ENCODE measurements at regions of chr16 and their contacts with region 1.

Region 1: DNA sequence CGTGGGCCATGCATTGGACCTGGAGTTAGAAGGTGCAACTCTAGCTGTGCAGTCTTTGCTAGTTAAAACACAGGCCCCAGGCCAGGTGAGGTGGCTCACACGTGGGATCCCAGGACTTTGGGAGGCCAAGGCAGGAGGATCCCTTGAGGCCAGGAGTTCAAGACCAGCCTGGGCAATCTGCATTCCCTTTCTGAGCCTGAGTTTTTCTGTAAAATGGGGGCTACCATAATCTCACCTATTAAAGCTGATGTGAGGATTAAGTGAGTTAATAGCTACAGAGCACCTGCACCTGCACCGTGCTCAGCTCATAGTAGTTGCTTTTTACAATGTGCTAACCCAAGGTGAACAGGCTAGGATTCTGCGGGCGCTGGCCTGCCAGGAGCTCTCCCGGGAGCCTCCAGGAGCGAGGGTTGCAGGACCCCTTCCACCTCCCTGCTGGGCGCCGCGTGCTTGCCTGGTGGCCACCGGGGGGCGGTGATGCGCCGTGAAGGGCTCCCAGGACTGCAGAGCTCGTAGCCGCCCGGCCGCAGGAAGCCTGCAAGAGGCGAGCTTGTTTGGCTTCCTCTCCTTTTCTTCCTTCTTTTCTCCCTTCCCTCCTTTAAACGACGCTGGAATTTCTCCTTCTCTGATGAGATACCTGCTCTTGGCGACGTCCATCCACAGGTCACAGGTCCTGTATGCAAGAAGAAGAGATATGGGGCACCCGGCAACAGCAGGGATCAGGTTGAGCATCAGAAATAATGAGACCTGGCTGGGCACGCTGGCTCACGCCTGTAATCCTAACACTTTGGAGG is 51.3 kb downstream of the ZFP90 start:
- DNase-seq: peak; percentile 2
- ATAC-seq: peak; percentile 100
- H3K4me3 ChIP-seq: peak overlapping the region in 1 of 2 experiments; percentile 35; a peak in 2 of 4 replicates
- H3K27ac ChIP-seq: no peak overlapping the region
- H3K4me1 ChIP-seq: no peaks in the 10 kb centered on the region
- H3K27me3 ChIP-seq: no peaks in the 10 kb centered on the region
- CTCF ChIP-seq: peak; percentile 89

Region 2: GRCh38 chr16:68528686-68529379 is 61.6 kb before region 1 on chr16:
- CTCF ChIA-PET with region 1: interaction called, 10 read pairs
- POLR2A ChIA-PET with region 1: no interaction called
- in situ Hi-C with region 1: no loop called
- intact Hi-C with region 1: no loop called
- DNase-seq: peak; percentile 64
- ATAC-seq: peak; percentile 88
- H3K4me3 ChIP-seq: peak overlapping the region; percentile 73 to 74
- H3K27ac ChIP-seq: no peak overlapping the region
- H3K4me1 ChIP-seq: no peaks in the 10 kb centered on the region; the same call in 1 of the 2 replicates
- H3K27me3 ChIP-seq: no peaks in the 10 kb centered on the region
- CTCF ChIP-seq: peak; percentile 90

Region 3: GRCh38 chr16:68658258-68659008 is 68.0 kb after region 1 on chr16:
- CTCF ChIA-PET with region 1: interaction called, 10 read pairs
- POLR2A ChIA-PET with region 1: no interaction called
- in situ Hi-C with region 1: no loop called
- intact Hi-C with region 1: no loop called
- DNase-seq: peak; percentile 25
- ATAC-seq: peak; percentile 85
- H3K4me3 ChIP-seq: peak overlapping the region in 1 of 2 experiments; percentile 33; a peak in 1 of 4 replicates
- H3K27ac ChIP-seq: peak overlapping the region; percentile 67
- H3K4me1 ChIP-seq: peaks cover 30% of the 10 kb centered on the region
- H3K27me3 ChIP-seq: no peaks in the 10 kb centered on the region
- CTCF ChIP-seq: no peak

Region 4: GRCh38 chr16:68689925-68690324 is 99.5 kb after region 1 on chr16:
- CTCF ChIA-PET with region 1: no interaction called
- POLR2A ChIA-PET with region 1: no interaction called
- in situ Hi-C with region 1: no loop called
- intact Hi-C with region 1: loop called (anchors 10 kb)
- DNase-seq: no peak
- ATAC-seq: peak; percentile 34; the same call in 1 of the 2 replicates
- H3K4me3 ChIP-seq: no peak overlapping the region
- H3K27ac ChIP-seq: no peak overlapping the region
- H3K4me1 ChIP-seq: no peaks in the 10 kb centered on the region
- H3K27me3 ChIP-seq: no peaks in the 10 kb centered on the region
- CTCF ChIP-seq: no peak

Region 5: DNA sequence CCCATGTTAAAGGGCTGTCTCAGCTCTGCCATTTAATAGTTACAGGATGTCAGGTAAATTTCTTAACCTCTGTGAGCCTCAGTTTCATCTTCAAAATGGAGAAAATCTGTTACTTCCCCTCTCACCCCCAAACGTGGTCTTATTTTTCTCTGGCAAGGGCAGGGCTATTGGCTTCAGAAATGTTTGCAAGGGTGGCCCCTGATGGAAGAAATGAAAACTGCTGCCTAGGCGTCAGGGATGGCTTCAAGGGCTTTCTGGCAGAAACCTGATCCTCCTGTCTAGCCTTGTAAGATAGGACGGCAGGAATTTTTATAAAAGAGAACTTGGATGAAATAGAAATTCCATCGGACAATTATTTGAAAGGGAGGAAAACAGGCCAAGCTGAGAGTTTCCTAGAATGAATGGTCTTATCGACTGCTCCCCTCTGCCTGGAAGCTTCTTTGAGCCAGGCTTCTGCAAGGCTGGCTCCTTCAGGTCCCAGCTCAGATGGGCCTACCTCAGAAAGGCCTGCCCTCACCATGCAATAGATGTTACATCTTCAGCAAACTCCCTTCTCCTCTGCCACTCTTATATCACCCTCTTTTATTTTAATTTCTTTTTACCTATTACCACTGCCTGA is 210.0 kb after region 1 on chr16:
- CTCF ChIA-PET with region 1: no interaction called
- POLR2A ChIA-PET with region 1: no interaction called
- in situ Hi-C with region 1: no loop called
- intact Hi-C with region 1: loop called (anchors 10 kb)
- DNase-seq: peak; percentile 63
- ATAC-seq: peak; percentile 88
- H3K4me3 ChIP-seq: no peak overlapping the region
- H3K27ac ChIP-seq: no peak overlapping the region
- H3K4me1 ChIP-seq: no peaks in the 10 kb centered on the region
- H3K27me3 ChIP-seq: no peaks in the 10 kb centered on the region
- CTCF ChIP-seq: peak; percentile 80